Activated CD4-positive, alpha-beta memory T cell treated with anti-CD3 and anti-CD28 coated beads for 36 hours (primary cell): ENCODE measurements at regions of chr1 and their contacts with region 1.

Region 1: DNA sequence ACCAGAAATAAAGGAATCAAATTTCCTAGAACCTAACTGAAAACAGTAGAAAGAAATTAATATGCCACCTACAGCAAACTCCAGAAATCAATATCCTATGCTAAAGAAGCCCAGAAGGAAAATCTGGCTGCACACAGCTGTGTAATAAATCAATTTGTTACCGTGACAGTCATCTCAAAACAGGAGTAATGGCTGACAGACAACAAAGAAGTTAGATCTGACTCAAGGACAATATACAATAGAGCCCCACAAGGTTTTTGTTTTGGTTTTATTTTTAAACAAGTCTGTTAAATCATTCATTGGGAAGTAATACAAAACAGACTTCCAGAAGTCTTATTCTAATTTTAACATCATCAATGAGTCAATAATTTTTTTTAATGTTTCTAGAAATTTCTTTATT is 168.4 kb downstream of the RERE start:
- DNase-seq: no peak
- H3K4me3 Mint-ChIP-seq: no peak overlapping the region
- H3K27ac Mint-ChIP-seq: no peak overlapping the region
- H3K4me1 Mint-ChIP-seq: peaks cover 47% of the 10 kb centered on the region
- H3K27me3 Mint-ChIP-seq: no peaks in the 10 kb centered on the region

Region 2: GRCh38 chr1:8660411-8660828 is 11.4 kb after region 1 on chr1:
- CTCF ChIA-PET with region 1: interaction called, 3 read pairs
- POLR2A ChIA-PET with region 1: interaction called, 4 read pairs
- intact Hi-C with region 1: loop called (anchors 1 kb)
- DNase-seq: no peak
- H3K4me3 Mint-ChIP-seq: no peak overlapping the region
- H3K27ac Mint-ChIP-seq: no peak overlapping the region
- H3K4me1 Mint-ChIP-seq: peaks cover 3% of the 10 kb centered on the region
- H3K27me3 Mint-ChIP-seq: no peaks in the 10 kb centered on the region

Region 3: DNA sequence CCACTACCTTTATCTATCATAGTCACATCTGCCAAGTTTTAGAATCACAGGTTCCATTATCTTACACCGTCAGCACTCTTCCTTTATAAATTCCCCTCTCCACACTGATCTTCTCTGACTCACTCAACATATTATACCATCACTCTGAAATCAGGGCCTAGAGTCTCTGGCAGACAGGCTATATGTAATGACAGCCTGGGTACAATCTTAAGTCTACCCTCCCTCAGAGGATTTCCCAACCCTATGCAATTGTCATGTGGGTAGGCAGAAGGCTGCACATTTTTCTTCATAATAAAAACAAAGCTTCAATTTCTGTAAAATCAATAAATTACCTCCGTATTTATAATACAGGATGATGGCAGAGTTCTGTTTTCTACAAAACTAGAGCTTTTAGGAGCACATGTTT is 30.4 kb after region 1 on chr1:
- CTCF ChIA-PET with region 1: interaction called, 3 read pairs
- POLR2A ChIA-PET with region 1: no interaction called
- intact Hi-C with region 1: loop called (anchors 5 kb)
- DNase-seq: no peak
- H3K4me3 Mint-ChIP-seq: no peak overlapping the region
- H3K27ac Mint-ChIP-seq: no peak overlapping the region
- H3K4me1 Mint-ChIP-seq: peaks cover 33% of the 10 kb centered on the region
- H3K27me3 Mint-ChIP-seq: no peaks in the 10 kb centered on the region